ENCODE measurements at regions of chr6 and their contacts with region 1.

Region 1: DNA sequence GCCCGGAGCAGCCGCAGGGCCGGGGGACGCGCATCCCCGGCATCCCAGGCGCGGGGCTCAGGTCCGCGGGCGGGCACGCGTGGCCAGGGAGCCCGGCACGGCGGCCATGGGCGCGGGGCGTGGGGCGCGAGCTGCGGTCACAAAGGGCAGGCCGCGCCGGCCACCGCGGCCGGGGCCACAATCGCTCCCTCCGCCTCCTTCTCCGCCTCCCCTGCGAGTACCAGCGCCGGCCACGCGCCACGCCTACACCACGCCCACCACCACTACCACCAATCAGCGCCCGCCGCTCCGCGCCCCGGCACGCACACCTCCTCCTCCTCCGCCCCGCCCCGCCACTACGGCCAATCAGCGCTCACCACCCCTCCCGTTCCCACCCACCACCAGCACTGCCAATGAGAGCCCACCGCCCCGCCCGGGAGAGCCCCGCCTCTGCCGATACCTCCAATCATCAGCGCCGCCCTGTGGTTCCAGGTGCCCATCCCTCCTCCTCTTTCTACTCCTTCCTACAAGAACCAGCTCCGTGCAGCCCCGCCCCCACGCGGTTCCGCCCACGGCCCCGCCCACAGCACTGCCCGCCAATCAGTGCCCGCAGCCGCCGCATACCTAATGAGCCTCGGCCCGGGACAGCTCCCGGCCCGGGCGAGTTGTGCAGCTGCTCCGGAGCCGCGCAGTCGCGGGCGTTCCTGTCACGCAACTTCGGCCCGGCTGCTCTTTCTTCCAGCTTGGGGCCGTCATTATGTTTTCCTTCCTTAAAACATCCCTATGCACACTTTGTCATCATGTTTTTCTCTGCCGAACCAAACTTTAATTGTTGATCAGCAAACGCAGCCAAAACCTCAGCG is at the start of gene RPS6KA2:
- DNase-seq: peak; percentile 100
- ATAC-seq: peak; percentile 96
- H3K4me3 Mint-ChIP-seq: peak within 1 kb of the TSS; percentile 71
- H3K27ac Mint-ChIP-seq: peak within 1 kb of the TSS; percentile 77
- H3K4me1 Mint-ChIP-seq: peaks cover 14% of the 10 kb centered on the region
- H3K27me3 Mint-ChIP-seq: peaks cover 22% of the 10 kb centered on the region
- total RNA-seq, gene RPS6KA2: 9.3 to 10.9 TPM

Region 2: DNA sequence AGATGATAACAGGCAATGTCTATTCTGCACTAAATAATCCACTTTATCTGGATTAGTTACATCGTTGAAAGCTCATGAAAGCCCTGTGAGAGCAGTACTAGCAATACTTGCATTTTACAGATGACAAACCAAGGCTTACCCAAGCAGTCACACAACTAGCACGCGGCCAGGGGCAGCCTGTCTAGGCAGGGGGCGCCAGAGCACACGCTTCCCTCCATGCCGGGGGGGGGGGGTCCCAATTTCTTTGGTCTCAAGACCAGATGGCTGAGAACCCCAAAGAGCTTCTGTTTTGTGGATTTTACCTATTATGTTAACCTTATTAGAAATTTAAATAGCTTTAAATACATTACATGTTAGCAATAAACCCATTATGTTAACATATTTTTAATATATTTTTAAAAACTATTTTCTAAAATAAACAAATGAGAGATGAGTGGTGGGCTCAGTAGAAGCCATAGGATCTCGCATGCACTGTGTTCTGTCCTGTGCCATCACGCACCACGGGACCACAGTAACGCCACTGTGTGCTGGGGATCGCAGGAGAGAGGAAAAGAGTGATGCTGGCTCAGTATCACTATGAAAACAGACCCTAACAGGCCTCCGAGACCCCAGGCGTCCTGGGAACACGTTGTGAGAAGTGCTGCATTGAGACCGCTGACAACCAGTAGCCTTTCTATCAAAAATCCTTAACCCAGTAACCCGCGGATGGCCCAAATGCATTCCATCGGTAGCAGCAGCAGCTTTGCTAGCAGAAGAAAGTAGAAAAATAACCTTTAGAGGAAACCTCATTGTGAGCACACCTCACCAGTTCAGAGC is 313.8 kb before region 1 on chr6:
- CTCF ChIA-PET with region 1: interaction called, 3 read pairs
- POLR2A ChIA-PET with region 1: no interaction called
- intact Hi-C with region 1: loop called in 1 of 2 experiments (anchors 10 kb)
- DNase-seq: peak; percentile 83
- ATAC-seq: peak; percentile 97
- H3K4me3 Mint-ChIP-seq: no peak overlapping the region
- H3K27ac Mint-ChIP-seq: no peak overlapping the region
- H3K4me1 Mint-ChIP-seq: peaks cover 3% of the 10 kb centered on the region
- H3K27me3 Mint-ChIP-seq: peaks cover 16% of the 10 kb centered on the region

Region 3: DNA sequence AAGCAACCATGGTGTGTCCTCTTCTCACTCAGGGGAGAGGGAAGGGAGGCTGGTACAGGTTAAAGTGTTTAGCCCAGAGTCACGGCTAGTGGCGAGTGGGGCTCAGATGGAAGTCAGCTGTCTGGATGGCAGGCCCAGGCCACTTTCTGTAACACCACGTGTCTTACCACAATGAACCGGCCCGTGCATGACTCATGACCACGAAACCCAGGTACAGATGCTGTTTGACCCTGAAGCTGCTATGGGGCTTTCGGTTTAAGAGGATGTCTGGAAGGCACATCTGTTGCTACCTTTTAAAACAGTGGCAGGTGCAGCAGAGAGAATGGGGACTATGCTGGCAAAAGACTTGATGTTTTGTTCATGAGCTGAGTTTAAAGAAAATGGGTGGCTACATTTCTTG is 208.0 kb before region 1 on chr6:
- CTCF ChIA-PET with region 1: interaction called, 3 read pairs
- POLR2A ChIA-PET with region 1: no interaction called
- intact Hi-C with region 1: loop called (anchors 2 to 5 kb)
- DNase-seq: peak; percentile 75
- ATAC-seq: peak; percentile 50
- H3K4me3 Mint-ChIP-seq: no peak overlapping the region
- H3K27ac Mint-ChIP-seq: peak overlapping the region; percentile 34
- H3K4me1 Mint-ChIP-seq: peaks cover 62% of the 10 kb centered on the region
- H3K27me3 Mint-ChIP-seq: no peaks in the 10 kb centered on the region

Region 4: GRCh38 chr6:166499350-166500163 is 127.7 kb before region 1 on chr6:
- CTCF ChIA-PET with region 1: no interaction called
- POLR2A ChIA-PET with region 1: no interaction called
- intact Hi-C with region 1: loop called in 1 of 2 experiments (anchors 1 kb)
- DNase-seq: peak; percentile 32
- ATAC-seq: peak; percentile 81
- H3K4me3 Mint-ChIP-seq: no peak overlapping the region
- H3K27ac Mint-ChIP-seq: peak overlapping the region; percentile 43
- H3K4me1 Mint-ChIP-seq: peaks cover 20% of the 10 kb centered on the region
- H3K27me3 Mint-ChIP-seq: no peaks in the 10 kb centered on the region

Region 5: DNA sequence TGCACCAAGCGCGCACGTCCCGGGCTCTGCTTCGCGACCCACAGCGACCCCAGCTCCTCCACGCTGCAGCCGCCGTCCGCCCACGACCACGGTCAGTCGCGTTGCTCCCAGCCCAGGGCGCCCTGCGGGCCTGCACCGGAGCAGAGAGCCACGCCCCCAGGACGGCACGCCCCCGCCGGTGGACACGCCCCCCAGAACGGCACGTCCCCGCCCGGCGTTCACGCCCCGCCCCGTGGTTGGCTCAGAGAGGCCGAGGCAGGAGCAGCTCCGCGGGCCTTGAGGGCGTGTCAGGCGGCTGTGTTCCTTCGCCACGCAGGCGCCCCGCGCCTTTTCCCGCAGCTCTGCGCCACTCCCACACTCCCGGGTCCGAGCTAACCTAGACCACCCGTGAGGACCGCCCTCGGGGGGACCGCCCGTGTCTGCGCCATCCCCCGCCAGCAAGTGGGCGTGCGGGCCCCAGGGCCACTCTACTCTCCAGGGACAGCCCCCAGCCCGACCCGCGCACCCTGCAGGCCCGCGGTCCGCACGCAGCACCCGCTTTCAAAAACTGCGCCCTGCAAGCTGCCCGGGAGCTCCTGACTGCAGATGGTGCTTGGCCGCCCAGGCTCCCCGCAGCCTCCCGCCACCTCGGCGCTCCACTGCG is 329.3 kb after region 1 on chr6 and contains the start of gene RNASET2:
- CTCF ChIA-PET with region 1: no interaction called
- POLR2A ChIA-PET with region 1: no interaction called
- intact Hi-C with region 1: loop called in 1 of 2 experiments (anchors 1 kb)
- DNase-seq: peak; percentile 100
- ATAC-seq: peak; percentile 80
- H3K4me3 Mint-ChIP-seq: peak within 1 kb of the TSS; percentile 94
- H3K27ac Mint-ChIP-seq: peak within 1 kb of the TSS; percentile 97
- H3K4me1 Mint-ChIP-seq: peaks cover 69% of the 10 kb centered on the region
- H3K27me3 Mint-ChIP-seq: no peaks in the 10 kb centered on the region
- total RNA-seq, gene RNASET2: 68.7 to 85.2 TPM

Region 6: GRCh38 chr6:167350731-167351655 is 723.7 kb after region 1 on chr6:
- CTCF ChIA-PET with region 1: no interaction called
- POLR2A ChIA-PET with region 1: no interaction called
- intact Hi-C with region 1: loop called in 1 of 2 experiments (anchors 5 kb)
- DNase-seq: peak; percentile 96
- ATAC-seq: peak; percentile 80
- H3K4me3 Mint-ChIP-seq: peak overlapping the region; percentile 57
- H3K27ac Mint-ChIP-seq: peak overlapping the region; percentile 90
- H3K4me1 Mint-ChIP-seq: peaks cover 27% of the 10 kb centered on the region
- H3K27me3 Mint-ChIP-seq: peaks cover 39% of the 10 kb centered on the region